CD8-positive, alpha-beta T cell (primary cell): ENCODE measurements at regions of chr14 and their contacts with region 1.

Region 1: GRCh38 chr14:55579724-55580469 is at the start of gene KTN1:
- DNase-seq: peak; percentile 68 to 92 (median 84)
- ATAC-seq: peak; percentile 86
- H3K4me3 ChIP-seq: peak within 1 kb of the TSS; percentile 89 to 95
- H3K4me3 Mint-ChIP-seq: peak within 1 kb of the TSS; percentile 96
- H3K27ac ChIP-seq: peak within 1 kb of the TSS; percentile 77
- H3K27ac Mint-ChIP-seq: peak within 1 kb of the TSS; percentile 95
- H3K4me1 ChIP-seq: peaks cover 41% of the 10 kb centered on the region
- H3K4me1 Mint-ChIP-seq: peaks cover 30% of the 10 kb centered on the region
- H3K27me3 ChIP-seq: no peaks in the 10 kb centered on the region
- H3K27me3 Mint-ChIP-seq: no peaks in the 10 kb centered on the region
- CTCF ChIP-seq: no peak
- total RNA-seq, gene KTN1: 64.2 to 74.5 TPM

Region 2: GRCh38 chr14:54396493-54397335 is 1183.2 kb before region 1 on chr14 and contains the start of gene CDKN3:
- CTCF ChIA-PET with region 1: no interaction called
- POLR2A ChIA-PET with region 1: no interaction called
- intact Hi-C with region 1: loop called in 1 of 2 experiments (anchors 10 kb)
- DNase-seq: peak; percentile 94 to 98 (median 96)
- ATAC-seq: peak; percentile 95
- H3K4me3 ChIP-seq: peak within 1 kb of the TSS; percentile 80 to 96
- H3K4me3 Mint-ChIP-seq: peak within 1 kb of the TSS; percentile 86
- H3K27ac ChIP-seq: peak within 1 kb of the TSS; percentile 23 to 46
- H3K27ac Mint-ChIP-seq: peak within 1 kb of the TSS; percentile 47
- H3K4me1 ChIP-seq: peaks cover 4% of the 10 kb centered on the region
- H3K4me1 Mint-ChIP-seq: peaks cover 9% of the 10 kb centered on the region
- H3K27me3 ChIP-seq: no peaks in the 10 kb centered on the region
- H3K27me3 Mint-ChIP-seq: no peaks in the 10 kb centered on the region
- CTCF ChIP-seq: no peak
- total RNA-seq, gene CDKN3: 0.56 to 0.68 TPM

Region 3: DNA sequence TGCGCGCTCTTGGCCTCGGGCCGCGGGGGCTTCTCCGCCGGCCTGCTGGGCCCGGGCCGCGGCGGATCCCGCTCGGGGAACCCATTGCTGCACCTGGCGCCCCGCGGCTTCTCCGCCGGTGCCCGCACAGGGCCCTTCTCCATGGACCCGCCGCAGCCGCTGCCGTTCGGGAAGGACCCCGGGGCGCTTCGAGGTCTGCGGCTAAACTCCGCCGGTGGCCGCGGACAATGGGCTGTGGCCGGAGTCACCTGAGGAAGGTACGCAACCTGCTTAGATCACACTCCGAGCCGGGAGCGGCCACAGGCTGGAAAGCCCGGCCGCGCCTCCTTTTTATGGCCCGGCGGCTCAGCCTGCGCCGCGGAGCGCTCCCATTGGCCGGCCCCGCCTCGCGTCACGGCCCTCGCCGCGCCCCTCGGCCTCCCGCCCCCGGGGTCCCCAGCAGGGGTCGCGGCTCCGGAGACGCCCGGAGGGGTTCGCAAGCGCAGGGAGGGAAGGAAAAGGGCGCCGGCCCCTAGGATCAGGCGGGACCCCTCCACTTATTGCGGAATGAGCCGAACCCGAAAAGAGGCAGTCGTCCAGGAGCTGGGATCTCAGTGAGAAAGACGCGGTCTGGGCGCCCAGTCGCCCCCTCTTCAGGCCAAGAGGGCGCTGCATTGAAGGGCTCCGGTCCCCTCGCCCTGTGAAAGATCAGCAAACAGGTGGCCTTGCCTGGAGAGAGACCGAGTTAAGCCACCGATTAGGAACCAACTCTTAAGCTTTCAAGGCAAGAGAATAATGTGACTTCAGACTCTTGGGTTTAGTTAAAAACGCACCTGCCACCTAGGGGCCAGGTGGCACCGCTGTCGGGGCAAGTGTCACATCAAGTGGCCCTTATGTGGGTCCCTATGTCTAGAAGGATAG is 677.1 kb before region 1 on chr14 and contains the start of gene GCH1:
- CTCF ChIA-PET with region 1: no interaction called
- POLR2A ChIA-PET with region 1: no interaction called
- intact Hi-C with region 1: loop called in 1 of 2 experiments (anchors 5 kb)
- DNase-seq: peak; percentile 51 to 91 (median 73)
- ATAC-seq: peak; percentile 73
- H3K4me3 ChIP-seq: peak within 1 kb of the TSS; percentile 95 to 98
- H3K4me3 Mint-ChIP-seq: peak within 1 kb of the TSS; percentile 92
- H3K27ac ChIP-seq: peak within 1 kb of the TSS; percentile 79 to 89
- H3K27ac Mint-ChIP-seq: peak within 1 kb of the TSS; percentile 91
- H3K4me1 ChIP-seq: peaks cover 11% of the 10 kb centered on the region
- H3K4me1 Mint-ChIP-seq: peaks cover 27% of the 10 kb centered on the region
- H3K27me3 ChIP-seq: no peaks in the 10 kb centered on the region
- H3K27me3 Mint-ChIP-seq: no peaks in the 10 kb centered on the region
- CTCF ChIP-seq: peak; percentile 61
- total RNA-seq, gene GCH1: 30.0 to 30.5 TPM

Region 4: GRCh38 chr14:55191203-55192053 is 388.5 kb before region 1 on chr14 and contains the start of gene DLGAP5:
- CTCF ChIA-PET with region 1: no interaction called
- POLR2A ChIA-PET with region 1: no interaction called
- intact Hi-C with region 1: loop called (anchors 10 kb)
- DNase-seq: peak; percentile 71 to 96 (median 85)
- ATAC-seq: peak; percentile 98
- H3K4me3 ChIP-seq: peak within 1 kb of the TSS; percentile 66 to 76
- H3K4me3 Mint-ChIP-seq: peak within 1 kb of the TSS; percentile 92
- H3K27ac ChIP-seq: peak within 1 kb of the TSS; percentile 9 to 52
- H3K27ac Mint-ChIP-seq: peak within 1 kb of the TSS; percentile 22
- H3K4me1 ChIP-seq: peaks cover 11% of the 10 kb centered on the region
- H3K4me1 Mint-ChIP-seq: peaks cover 12% of the 10 kb centered on the region
- H3K27me3 ChIP-seq: no peaks in the 10 kb centered on the region
- H3K27me3 Mint-ChIP-seq: no peaks in the 10 kb centered on the region
- CTCF ChIP-seq: no peak
- total RNA-seq, gene DLGAP5: 0.54 TPM in 1 of 2 experiments, not detected in the other

Region 5: GRCh38 chr14:55624913-55625312 is 45.0 kb after region 1 on chr14:
- CTCF ChIA-PET with region 1: no interaction called
- POLR2A ChIA-PET with region 1: no interaction called
- intact Hi-C with region 1: loop called in 1 of 2 experiments (anchors 5 kb)
- DNase-seq: no peak
- ATAC-seq: no peak
- H3K4me3 ChIP-seq: no peak overlapping the region
- H3K4me3 Mint-ChIP-seq: no peak overlapping the region
- H3K27ac ChIP-seq: no peak overlapping the region
- H3K27ac Mint-ChIP-seq: no peak overlapping the region
- H3K4me1 ChIP-seq: no peaks in the 10 kb centered on the region
- H3K4me1 Mint-ChIP-seq: peaks cover 14% of the 10 kb centered on the region
- H3K27me3 ChIP-seq: no peaks in the 10 kb centered on the region
- H3K27me3 Mint-ChIP-seq: no peaks in the 10 kb centered on the region
- CTCF ChIP-seq: no peak

Region 6: GRCh38 chr14:55673048-55673447 is 93.2 kb after region 1 on chr14:
- CTCF ChIA-PET with region 1: no interaction called
- POLR2A ChIA-PET with region 1: no interaction called
- intact Hi-C with region 1: no loop called
- DNase-seq: no peak
- ATAC-seq: no peak
- H3K4me3 ChIP-seq: no peak overlapping the region
- H3K4me3 Mint-ChIP-seq: no peak overlapping the region
- H3K27ac ChIP-seq: no peak overlapping the region
- H3K27ac Mint-ChIP-seq: no peak overlapping the region
- H3K4me1 ChIP-seq: no peaks in the 10 kb centered on the region
- H3K4me1 Mint-ChIP-seq: no peaks in the 10 kb centered on the region
- H3K27me3 ChIP-seq: no peaks in the 10 kb centered on the region
- H3K27me3 Mint-ChIP-seq: no peaks in the 10 kb centered on the region
- CTCF ChIP-seq: no peak

Region 7: DNA sequence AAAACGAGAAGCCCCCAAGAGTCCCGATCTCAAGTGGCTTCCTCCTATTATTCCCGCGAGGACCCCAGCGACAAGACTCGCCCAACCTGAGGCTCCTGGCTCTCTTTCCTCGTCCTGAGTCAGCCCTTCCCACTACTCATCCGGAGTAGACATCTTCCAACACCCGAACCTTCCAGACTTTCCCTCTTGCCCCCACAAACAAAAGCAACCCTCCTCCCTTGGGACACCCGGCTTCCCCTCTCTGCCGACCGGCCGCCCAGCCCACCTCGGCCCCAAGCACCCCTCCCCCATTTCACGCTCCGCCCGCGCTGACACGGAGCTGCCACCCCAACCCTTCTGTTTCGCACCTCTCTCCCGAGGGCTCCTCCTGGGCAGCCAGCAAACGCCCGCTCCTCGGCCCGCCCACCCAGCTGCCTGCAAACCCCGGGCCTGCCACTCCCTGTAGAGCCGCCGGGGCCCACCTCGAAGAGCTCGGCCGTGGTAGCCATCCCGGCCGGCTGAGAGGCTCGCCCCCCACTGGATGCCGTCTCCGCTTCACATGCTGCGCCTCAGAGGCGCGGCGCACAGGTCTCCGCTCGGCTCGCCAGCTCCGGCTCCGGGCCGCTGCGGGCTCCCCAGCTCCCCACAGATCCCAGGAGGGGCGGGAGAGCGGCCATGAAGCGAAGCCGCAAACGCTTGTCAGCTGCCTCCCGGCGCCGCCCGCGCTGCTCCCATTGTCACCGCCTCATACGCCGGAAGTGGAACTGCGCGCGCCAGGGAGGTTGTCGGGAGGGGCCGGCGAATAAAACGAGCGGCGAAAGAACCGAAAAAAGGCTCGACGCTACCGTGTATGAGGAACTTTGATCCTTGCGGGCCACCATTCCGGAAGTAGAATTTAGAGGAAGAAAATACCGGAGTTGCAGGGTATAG is 1688.5 kb after region 1 on chr14 and contains the starts of genes AP5M1 and EXOC5:
- CTCF ChIA-PET with region 1: no interaction called
- POLR2A ChIA-PET with region 1: no interaction called
- intact Hi-C with region 1: loop called (anchors 2 to 5 kb)
- DNase-seq: peak; percentile 80 to 97 (median 91)
- ATAC-seq: peak; percentile 80
- H3K4me3 ChIP-seq: peak within 1 kb of the TSS; percentile 77 to 84
- H3K4me3 Mint-ChIP-seq: peak within 1 kb of the TSS; percentile 99
- H3K27ac ChIP-seq: peak within 1 kb of the TSS; percentile 85 to 90
- H3K27ac Mint-ChIP-seq: peak within 1 kb of the TSS; percentile 100
- H3K4me1 ChIP-seq: peaks cover 35% of the 10 kb centered on the region
- H3K4me1 Mint-ChIP-seq: peaks cover 70% of the 10 kb centered on the region
- H3K27me3 ChIP-seq: no peaks in the 10 kb centered on the region
- H3K27me3 Mint-ChIP-seq: no peaks in the 10 kb centered on the region
- CTCF ChIP-seq: no peak
- total RNA-seq, gene AP5M1: 38.5 to 42.4 TPM
- total RNA-seq, gene EXOC5: 17.0 to 17.8 TPM